Aorta (tissue), 5 donors: ENCODE measurements at regions of chr17 and their contacts with region 1.

Region 1: GRCh38 chr17:61201232-61201640 is 198.4 kb upstream of the TBX2 start:
- DNase-seq: no peak
- ATAC-seq: peak; percentile 71
- H3K4me3 ChIP-seq: peak overlapping the region in 1 of 2 donors; percentile 54
- H3K27ac ChIP-seq: peak overlapping the region; percentile 82 to 87
- H3K4me1 ChIP-seq: peaks cover 4% of the 10 kb centered on the region in 2 donors
- H3K27me3 ChIP-seq: no peaks in the 10 kb centered on the region

Region 2: GRCh38 chr17:61002316-61002736 is 198.9 kb before region 1 on chr17:
- intact Hi-C with region 1: loop called (anchors 10 kb)
- DNase-seq: no peak
- ATAC-seq: no peak
- H3K4me3 ChIP-seq: no peak overlapping the region
- H3K27ac ChIP-seq: no peak overlapping the region
- H3K4me1 ChIP-seq: no peaks in the 10 kb centered on the region
- H3K27me3 ChIP-seq: no peaks in the 10 kb centered on the region

Region 3: DNA sequence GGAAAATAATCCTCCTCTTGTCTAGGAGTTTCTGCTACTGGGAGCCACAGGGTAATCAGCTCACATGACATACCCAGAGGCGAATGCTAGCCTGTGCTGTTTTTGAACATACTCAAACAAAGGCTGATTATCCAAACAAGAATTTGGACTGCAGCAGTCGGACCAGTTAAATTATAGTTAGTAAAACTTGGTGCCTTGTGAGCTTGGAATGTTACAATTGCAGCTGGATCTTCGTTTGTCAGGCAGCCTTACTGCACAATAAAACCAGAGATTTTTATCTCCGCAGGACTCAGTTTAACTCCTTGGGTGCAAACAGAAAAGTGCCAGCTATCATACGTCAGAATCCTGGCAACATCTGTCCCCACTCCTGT is 34.6 kb after region 1 on chr17:
- intact Hi-C with region 1: loop called (anchors 5 kb)
- DNase-seq: no peak
- ATAC-seq: no peak
- H3K4me3 ChIP-seq: no peak overlapping the region
- H3K27ac ChIP-seq: no peak overlapping the region
- H3K4me1 ChIP-seq: peaks cover 2% of the 10 kb centered on the region in 2 donors
- H3K27me3 ChIP-seq: no peaks in the 10 kb centered on the region

Region 4: DNA sequence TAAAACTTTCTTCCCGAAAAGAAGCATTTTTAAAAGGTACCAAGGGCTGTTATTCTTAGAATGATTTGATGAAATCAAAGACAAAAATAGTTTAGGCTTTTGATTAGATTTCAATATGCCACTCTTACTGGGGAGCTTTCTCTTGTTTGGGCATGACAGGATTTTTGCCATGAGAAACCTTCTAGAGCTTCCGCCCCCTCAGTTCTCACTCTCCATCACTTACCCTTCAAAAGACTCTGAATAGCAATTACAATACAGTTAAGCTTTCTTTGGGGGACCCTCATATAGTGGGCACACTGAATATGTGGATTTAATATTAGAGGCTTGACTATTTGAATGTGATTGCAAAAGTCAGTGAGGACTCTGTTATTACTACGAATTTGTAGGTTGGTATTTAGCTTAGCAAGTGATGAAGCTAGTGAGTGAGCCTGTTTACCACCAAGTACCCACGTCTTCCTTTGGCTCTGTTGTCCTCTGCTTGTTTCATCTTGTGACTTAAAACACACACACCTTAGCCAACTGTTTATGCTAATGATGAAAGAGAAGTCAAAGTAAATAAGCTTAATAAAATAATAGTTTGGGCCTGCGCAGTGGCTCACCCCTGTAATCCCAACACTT is 39.7 kb after region 1 on chr17:
- intact Hi-C with region 1: loop called (anchors 5 kb)
- DNase-seq: no peak
- ATAC-seq: no peak
- H3K4me3 ChIP-seq: no peak overlapping the region
- H3K27ac ChIP-seq: no peak overlapping the region
- H3K4me1 ChIP-seq: no peaks in the 10 kb centered on the region
- H3K27me3 ChIP-seq: no peaks in the 10 kb centered on the region

Region 5: GRCh38 chr17:61251939-61252896 is 51.0 kb after region 1 on chr17:
- intact Hi-C with region 1: loop called in 1 of 2 experiments (anchors 5 kb)
- DNase-seq: peak; percentile 96 to 97
- ATAC-seq: peak; percentile 95
- H3K4me3 ChIP-seq: no peak overlapping the region
- H3K27ac ChIP-seq: peak overlapping the region; percentile 80 to 98
- H3K4me1 ChIP-seq: peaks cover 8 to 9% of the 10 kb centered on the region in 2 donors
- H3K27me3 ChIP-seq: no peaks in the 10 kb centered on the region

Region 6: DNA sequence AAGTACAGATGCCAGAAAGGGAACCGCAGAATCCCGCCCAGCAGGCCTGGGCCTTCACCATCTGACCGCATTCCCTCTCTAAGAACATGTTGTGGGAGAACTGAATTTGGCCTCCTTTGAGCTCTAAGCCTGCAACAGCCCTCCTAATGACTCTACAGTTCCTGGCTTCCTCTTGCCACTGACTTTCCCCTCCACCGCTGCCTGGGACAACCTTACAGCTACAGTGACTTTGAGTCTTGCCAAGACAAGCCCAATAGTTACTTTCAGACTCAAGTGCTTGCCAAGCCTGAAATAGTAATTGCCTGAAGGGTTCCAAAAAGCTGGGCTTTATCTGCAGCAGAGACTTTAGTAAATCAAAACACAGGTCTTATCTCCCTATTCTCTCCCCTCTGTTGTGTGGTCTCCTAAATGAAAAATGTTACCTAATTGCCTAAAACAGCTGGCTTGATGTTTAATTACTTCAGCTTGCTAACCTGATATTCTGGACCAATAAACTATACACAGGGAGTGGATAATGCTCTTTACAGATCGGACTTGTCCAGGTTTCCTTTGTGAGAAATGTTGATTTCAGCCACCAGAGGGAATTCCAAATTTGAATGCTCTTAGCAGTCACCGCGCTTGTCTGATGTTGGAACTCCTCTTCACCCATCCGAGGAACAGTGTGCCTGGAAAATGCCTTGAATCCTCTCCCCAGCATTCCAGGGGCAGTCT is 113.3 kb after region 1 on chr17:
- intact Hi-C with region 1: loop called in 1 of 2 experiments (anchors 5 kb)
- DNase-seq: peak; percentile 82 to 84
- ATAC-seq: peak; percentile 91
- H3K4me3 ChIP-seq: no peak overlapping the region
- H3K27ac ChIP-seq: peak overlapping the region; percentile 67 to 94
- H3K4me1 ChIP-seq: peaks cover 0 to 5% of the 10 kb centered on the region in 2 donors
- H3K27me3 ChIP-seq: no peaks in the 10 kb centered on the region